Caco-2 (cell line): ENCODE measurements at regions of chr3 and their contacts with region 1.

Region 1: DNA sequence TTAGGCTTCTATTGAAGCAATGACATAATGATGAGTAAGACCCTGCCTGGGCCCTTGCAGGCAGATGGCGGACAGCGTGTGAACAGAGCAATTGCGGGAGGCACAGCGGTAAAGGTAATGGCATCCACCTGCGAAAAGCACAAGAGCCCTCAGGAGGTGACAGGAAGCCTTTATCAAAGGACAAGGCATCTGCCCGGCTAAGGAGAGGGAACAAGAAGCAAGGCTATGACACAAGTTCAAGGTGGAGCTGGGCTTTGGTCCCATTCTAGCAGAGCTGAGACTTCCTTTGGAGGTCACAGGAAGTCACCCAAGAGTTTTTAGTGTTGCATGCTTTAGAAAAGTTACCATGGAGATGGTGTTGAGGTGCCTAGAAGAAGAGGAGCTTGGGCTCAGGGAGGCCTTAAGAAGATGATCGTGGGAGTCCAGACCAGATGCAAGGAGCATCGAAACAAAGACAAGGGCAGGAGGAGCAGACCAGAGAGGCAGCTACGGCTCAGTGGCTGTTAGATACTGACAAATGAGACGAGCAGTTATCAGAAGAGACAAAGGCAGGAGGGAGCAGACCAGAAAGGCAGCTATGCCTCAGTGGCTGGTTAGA is 34.5 kb downstream of the OSBPL10 start:
- DNase-seq: no peak
- H3K4me3 ChIP-seq: no peak overlapping the region
- H3K4me3 Mint-ChIP-seq: no peak overlapping the region
- H3K27ac Mint-ChIP-seq: peak overlapping the region; percentile 3
- H3K4me1 ChIP-seq: peaks cover 21% of the 10 kb centered on the region
- H3K4me1 Mint-ChIP-seq: peaks cover 28% of the 10 kb centered on the region
- H3K27me3 ChIP-seq: no peaks in the 10 kb centered on the region
- H3K27me3 Mint-ChIP-seq: no peaks in the 10 kb centered on the region
- CTCF ChIP-seq: no peak

Region 2: GRCh38 chr3:31831598-31831997 is 115.0 kb before region 1 on chr3:
- CTCF ChIA-PET with region 1: no interaction called
- POLR2A ChIA-PET with region 1: no interaction called
- intact Hi-C with region 1: no loop called
- DNase-seq: no peak
- H3K4me3 ChIP-seq: no peak overlapping the region
- H3K4me3 Mint-ChIP-seq: no peak overlapping the region
- H3K27ac Mint-ChIP-seq: no peak overlapping the region
- H3K4me1 ChIP-seq: no peaks in the 10 kb centered on the region
- H3K4me1 Mint-ChIP-seq: peaks cover 4% of the 10 kb centered on the region
- H3K27me3 ChIP-seq: no peaks in the 10 kb centered on the region
- H3K27me3 Mint-ChIP-seq: no peaks in the 10 kb centered on the region
- CTCF ChIP-seq: no peak

Region 3: DNA sequence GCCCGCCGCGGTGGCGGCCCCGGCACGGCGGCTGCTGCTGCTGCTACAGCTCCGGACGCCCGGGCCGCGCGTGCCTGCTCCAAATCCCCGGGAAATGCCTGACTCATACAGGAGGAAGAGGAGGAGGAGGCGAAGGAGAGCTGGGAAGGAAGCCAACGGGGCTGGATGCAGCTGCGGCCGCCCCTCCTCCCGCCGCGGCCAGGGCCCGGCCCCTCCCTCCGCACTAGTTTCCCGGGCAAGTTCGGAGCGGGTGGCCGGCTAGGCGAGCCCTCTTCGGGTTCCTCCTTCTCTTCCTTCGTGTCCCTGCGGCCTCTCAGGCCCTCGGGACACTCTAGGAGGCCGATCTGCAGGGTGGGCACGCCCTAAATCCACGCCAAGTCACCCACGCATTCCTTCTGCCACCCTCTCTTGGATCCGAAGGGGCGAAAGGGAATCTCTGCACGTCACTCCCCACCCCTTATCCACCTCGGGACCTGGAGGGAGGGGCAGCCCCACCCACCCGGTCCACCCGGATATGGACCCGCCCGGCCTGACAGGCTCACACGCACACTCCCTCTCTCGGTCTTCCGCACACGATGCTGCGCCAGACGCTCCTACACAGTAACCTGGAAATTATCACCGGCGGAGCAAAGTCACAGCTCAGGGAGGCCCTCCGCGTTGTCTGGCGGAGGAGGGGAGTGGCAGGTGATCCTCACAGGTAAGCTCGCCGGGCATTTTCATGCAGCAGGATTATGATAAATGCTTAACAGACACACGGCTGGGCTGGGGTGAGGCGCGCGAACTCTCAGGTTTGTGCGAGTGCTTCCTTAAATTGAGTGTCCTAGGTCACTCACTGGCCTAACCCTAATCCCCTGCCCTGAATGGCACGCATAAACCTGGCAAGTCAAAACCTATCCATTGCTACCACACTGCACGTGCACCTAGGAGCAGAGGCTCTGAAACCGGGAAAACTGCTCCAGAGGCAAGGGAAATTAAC is 34.9 kb after region 1 on chr3 and contains the starts of genes OSBPL10 and ZNF860:
- CTCF ChIA-PET with region 1: no interaction called
- POLR2A ChIA-PET with region 1: no interaction called
- intact Hi-C with region 1: loop called (anchors 1 kb)
- DNase-seq: peak; percentile 84 to 89
- H3K4me3 ChIP-seq: peak within 1 kb of the TSS; percentile 62
- H3K4me3 Mint-ChIP-seq: peak within 1 kb of the TSS; percentile 93
- H3K27ac Mint-ChIP-seq: peak within 1 kb of the TSS; percentile 88
- H3K4me1 ChIP-seq: peaks cover 28% of the 10 kb centered on the region
- H3K4me1 Mint-ChIP-seq: peaks cover 23% of the 10 kb centered on the region
- H3K27me3 ChIP-seq: no peaks in the 10 kb centered on the region
- H3K27me3 Mint-ChIP-seq: no peaks in the 10 kb centered on the region
- CTCF ChIP-seq: no peak
- total RNA-seq, gene OSBPL10: 71.2 and 79.5 TPM in 2 replicates
- total RNA-seq, gene ZNF860: 4.7 and 5.9 TPM in 2 replicates